ENCODE measurements at regions of chr11 and their contacts with region 1.

Region 1: DNA sequence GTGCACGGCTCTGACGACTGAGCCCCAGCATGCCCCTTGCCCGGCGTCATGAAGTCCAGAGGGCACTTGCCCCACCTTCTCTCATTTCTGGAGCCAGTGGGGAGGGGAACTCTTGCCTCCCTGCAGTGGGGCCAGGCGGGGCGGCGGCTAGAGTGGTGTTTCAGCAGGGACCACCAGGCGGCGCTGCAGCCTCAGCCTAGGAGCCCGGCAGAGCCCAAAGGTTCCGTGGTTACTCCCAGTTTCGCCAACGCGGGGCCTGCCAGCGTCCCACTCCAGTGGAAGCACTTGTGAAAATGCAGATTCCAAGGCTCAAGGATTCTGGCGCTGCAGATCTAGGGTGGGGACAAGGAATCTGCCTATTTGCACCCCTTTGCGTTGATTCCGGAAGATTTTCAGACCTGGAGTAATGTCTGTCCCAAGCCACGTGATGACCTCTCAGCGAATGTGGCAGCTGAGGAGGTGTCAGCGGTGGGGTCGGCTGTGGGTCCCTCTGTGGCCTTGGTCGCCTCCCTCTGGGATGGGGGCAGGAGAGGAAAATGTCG is 55.7 kb downstream of the CD82 start:
- DNase-seq: peak; percentile 82
- ATAC-seq: peak; percentile 74 to 80

Region 2: DNA sequence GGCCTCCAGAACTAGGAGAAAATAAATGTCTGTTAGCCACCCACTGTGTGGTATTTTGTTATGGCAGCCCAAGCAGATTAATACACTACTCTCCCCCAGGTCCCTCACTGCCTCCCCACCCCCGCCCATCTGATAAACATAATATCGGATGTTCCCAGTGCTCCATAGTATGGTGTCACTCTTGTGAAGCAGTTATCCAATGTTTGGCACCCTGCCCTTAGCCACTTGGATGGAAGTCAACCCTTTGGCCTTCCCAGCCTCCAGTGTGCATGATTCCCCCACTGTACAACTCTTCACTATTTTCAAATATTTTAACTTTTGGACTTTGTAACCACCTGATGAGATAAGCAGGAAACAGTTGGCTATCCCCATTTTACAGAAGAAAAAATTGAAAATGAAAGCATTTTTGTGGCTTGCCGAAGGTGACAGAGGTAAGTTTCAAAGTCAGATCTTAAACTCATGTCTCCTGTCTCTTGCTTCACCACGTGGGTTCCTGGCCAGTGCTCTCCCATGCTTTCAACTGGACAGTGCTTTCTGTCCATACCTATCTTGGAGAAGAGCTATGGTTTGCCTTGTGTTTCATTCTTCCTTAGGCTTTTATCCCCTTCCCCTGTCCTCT is 364.4 kb before region 1 on chr11:
- intact Hi-C with region 1: no loop called
- DNase-seq: no peak
- ATAC-seq: peak; percentile 53 to 57

Region 3: DNA sequence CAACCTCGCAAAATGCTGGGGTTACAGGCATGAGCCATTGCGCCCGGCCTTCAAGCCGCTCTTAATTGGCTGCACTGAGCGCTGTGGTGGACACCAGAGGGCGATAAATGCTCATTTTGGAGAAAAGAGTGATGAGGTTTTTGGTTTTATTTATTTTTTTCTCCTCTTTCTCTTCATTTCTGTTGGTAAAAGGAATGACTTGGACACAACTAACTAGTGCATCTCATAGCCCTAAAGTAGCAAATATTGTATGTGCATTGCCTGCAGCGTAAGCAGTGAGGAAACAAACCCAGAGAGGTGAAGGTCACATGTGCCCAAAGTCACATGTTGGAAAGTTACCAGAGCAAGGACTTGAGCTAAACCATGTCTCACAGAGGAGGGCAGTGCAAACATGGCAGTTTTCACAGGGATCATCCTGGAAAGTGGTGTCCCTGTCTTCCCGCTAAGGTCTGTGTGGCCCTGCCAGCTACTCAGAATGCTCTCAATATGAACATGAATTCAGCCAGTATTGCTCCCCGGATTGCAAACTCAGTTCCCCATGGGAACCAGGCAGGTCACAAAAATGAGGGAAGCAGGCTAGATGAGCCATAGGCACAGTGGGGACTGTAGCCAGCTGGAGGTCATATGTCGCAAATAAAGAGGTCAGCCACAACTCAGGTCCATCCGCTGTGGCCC is 64.3 kb before region 1 on chr11:
- intact Hi-C with region 1: loop called (anchors 1 to 2 kb)
- DNase-seq: peak; percentile 71
- ATAC-seq: peak; percentile 79 to 87

Region 4: GRCh38 chr11:44893846-44894617 is 272.8 kb after region 1 on chr11:
- intact Hi-C with region 1: loop called (anchors 5 kb)
- DNase-seq: peak; percentile 80
- ATAC-seq: peak; percentile 89 to 93

Region 5: DNA sequence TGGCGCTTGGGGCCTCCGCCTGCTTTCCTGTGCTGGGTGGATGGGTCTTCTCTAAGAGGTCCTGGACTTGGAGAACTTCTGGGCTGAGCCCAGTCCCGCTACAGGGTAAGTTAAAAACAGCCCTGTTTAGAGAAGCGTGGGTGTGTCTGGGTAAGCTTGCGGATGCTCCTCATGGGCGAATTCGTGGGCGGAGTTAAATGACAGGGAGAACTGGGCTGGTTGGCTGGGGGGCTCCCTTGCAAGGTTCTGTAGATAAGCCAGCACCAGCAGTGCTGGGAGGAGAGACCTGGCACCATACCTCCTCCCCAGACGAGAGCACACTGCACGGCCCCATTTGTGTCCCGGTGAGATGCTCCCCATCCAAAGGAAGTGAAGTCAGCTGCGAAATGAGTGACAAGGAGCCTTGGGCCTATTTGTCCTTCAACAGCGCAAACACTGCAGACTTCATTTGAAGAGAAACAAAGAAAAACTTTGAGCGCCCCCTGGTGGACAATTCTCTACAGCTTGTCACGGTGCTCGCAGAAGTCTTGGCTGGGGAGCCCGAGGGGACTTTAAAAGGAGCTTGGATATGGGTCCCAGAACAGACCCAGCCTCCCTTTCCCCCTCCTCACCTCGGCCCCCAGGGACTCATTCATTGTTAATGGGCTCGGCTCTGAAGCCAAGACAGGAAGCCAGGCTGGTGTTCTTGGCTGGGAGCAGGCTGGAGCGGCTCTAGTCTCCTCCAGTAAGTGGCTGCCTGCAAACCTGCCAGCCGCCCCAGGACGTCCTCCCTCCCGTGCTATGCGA is 290.0 kb after region 1 on chr11:
- intact Hi-C with region 1: loop called (anchors 2 kb)
- DNase-seq: peak; percentile 91
- ATAC-seq: peak; percentile 78 to 86

Region 6: GRCh38 chr11:45102810-45103621 is 481.8 kb after region 1 on chr11:
- intact Hi-C with region 1: loop called (anchors 5 to 10 kb)
- DNase-seq: peak; percentile 64
- ATAC-seq: peak; percentile 60 to 63

Measured in left cardiac atrium (tissue), 4 donors.